ENCODE measurements at regions of chr19 and their contacts with region 1.

Region 1: DNA sequence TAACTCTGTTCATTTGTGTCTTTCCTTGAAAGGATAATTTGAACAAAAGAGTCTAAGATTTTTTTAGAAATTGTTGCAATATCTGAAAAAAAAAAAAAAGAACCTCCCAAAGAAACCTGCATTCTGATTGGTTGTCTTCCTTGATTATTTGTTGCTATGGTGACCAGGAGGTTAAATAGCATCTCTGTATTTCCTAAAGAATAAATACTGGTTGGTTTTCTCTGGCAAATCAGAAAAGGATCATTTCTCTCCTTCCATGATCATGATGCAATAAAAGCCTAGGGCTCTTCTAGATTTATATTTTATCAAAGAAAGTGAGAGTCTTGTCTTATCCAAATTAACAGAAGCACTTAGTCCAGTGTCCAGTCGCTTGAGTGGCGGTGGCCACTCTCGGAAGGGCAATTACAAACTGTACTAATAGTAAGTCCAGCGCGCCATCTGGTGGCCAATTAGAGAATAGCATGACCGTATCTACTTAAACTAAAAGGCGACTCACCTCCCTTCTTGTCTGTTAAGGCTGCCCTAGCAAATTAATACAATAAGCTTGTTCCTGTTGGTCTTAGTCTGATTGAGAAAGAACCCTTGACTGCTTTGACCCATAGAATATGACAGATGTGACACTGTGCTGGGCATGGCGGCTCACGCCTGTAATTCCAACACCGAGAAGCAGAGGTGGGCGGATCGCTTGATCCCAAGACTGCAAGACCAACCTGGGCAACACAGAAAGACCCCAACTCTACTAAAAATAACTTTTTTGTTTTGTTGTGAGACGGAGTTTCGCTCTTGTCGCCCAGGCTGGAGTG is 47.0 kb upstream of the PNMA8B start:
- DNase-seq: peak; percentile 87
- ATAC-seq: peak; percentile 98
- H3K4me3 ChIP-seq: no peak overlapping the region
- H3K27ac ChIP-seq: no peak overlapping the region
- H3K4me1 ChIP-seq: no peaks in the 10 kb centered on the region
- H3K27me3 ChIP-seq: peaks cover 2% of the 10 kb centered on the region; the same call in 1 of the 2 replicates
- CTCF ChIP-seq: peak; percentile 83
- POLR2A ChIP-seq: no peak
- RAD21 ChIP-seq: peak; percentile 74

Region 2: GRCh38 chr19:46317339-46317738 is 225.3 kb before region 1 on chr19:
- CTCF ChIA-PET with region 1: no interaction called
- POLR2A ChIA-PET with region 1: interaction called, 19 read pairs
- dilution Hi-C with region 1: no loop called
- in situ Hi-C with region 1: no loop called
- intact Hi-C with region 1: no loop called
- DNase-seq: no peak
- ATAC-seq: no peak
- H3K4me3 ChIP-seq: no peak overlapping the region
- H3K27ac ChIP-seq: no peak overlapping the region
- H3K4me1 ChIP-seq: no peaks in the 10 kb centered on the region
- H3K27me3 ChIP-seq: peaks cover 3% of the 10 kb centered on the region; the same call in 1 of the 2 replicates
- CTCF ChIP-seq: no peak
- POLR2A ChIP-seq: no peak
- RAD21 ChIP-seq: no peak

Region 3: DNA sequence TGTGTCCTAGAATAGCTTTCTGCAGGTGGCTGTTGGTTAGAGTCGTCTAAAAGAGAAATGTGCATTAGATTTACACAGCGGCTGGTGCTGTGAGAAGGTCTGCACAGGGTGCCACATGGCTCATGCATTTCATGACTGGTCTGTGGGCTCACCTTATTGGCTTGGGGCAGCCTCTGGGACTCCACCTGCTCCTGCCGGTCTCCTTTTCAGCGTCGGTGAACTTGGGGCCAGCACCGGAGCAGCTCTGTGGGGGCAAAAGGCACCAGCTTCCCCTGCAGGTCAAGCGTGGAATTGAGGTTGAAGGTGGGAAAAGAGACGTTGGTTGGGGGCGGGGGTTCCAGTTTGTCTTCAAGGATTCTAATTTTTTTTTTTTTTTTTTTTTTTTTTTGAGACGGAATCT is 110.8 kb before region 1 on chr19:
- CTCF ChIA-PET with region 1: no interaction called
- POLR2A ChIA-PET with region 1: interaction called, 15 read pairs
- dilution Hi-C with region 1: no loop called
- in situ Hi-C with region 1: no loop called
- intact Hi-C with region 1: no loop called
- DNase-seq: no peak
- ATAC-seq: no peak
- H3K4me3 ChIP-seq: no peak overlapping the region
- H3K27ac ChIP-seq: no peak overlapping the region
- H3K4me1 ChIP-seq: no peaks in the 10 kb centered on the region
- H3K27me3 ChIP-seq: peaks cover 7% of the 10 kb centered on the region; the same call in 1 of the 2 replicates
- CTCF ChIP-seq: no peak
- POLR2A ChIP-seq: no peak
- RAD21 ChIP-seq: no peak

Region 4: GRCh38 chr19:46520616-46521015 is 22.0 kb before region 1 on chr19:
- CTCF ChIA-PET with region 1: interaction called, 5 read pairs
- POLR2A ChIA-PET with region 1: interaction called, 13 read pairs
- dilution Hi-C with region 1: no loop called
- in situ Hi-C with region 1: no loop called
- intact Hi-C with region 1: loop called (anchors 1 kb)
- DNase-seq: no peak
- ATAC-seq: no peak
- H3K4me3 ChIP-seq: no peak overlapping the region
- H3K27ac ChIP-seq: no peak overlapping the region
- H3K4me1 ChIP-seq: no peaks in the 10 kb centered on the region
- H3K27me3 ChIP-seq: peaks cover 5% of the 10 kb centered on the region
- CTCF ChIP-seq: no peak
- POLR2A ChIP-seq: no peak
- RAD21 ChIP-seq: no peak

Region 5: GRCh38 chr19:46661020-46661731 is 118.5 kb after region 1 on chr19 and contains the start of gene DACT3:
- CTCF ChIA-PET with region 1: no interaction called
- POLR2A ChIA-PET with region 1: no interaction called
- dilution Hi-C with region 1: no loop called
- in situ Hi-C with region 1: loop called (anchors 10 kb)
- intact Hi-C with region 1: loop called (anchors 5 kb)
- DNase-seq: peak; percentile 100
- ATAC-seq: peak; percentile 94
- H3K4me3 ChIP-seq: peak within 1 kb of the TSS; percentile 64
- H3K27ac ChIP-seq: peak within 1 kb of the TSS; percentile 39
- H3K4me1 ChIP-seq: peaks cover 4% of the 10 kb centered on the region
- H3K27me3 ChIP-seq: no peaks in the 10 kb centered on the region; the same call in 1 of the 2 replicates
- CTCF ChIP-seq: no peak
- POLR2A ChIP-seq: no peak
- RAD21 ChIP-seq: no peak
- total RNA-seq, gene DACT3: 1.6 and 1.9 TPM in 2 replicates